CD8-positive, alpha-beta memory T cell (primary cell): ENCODE measurements at regions of chr22 and their contacts with region 1.

Region 1: DNA sequence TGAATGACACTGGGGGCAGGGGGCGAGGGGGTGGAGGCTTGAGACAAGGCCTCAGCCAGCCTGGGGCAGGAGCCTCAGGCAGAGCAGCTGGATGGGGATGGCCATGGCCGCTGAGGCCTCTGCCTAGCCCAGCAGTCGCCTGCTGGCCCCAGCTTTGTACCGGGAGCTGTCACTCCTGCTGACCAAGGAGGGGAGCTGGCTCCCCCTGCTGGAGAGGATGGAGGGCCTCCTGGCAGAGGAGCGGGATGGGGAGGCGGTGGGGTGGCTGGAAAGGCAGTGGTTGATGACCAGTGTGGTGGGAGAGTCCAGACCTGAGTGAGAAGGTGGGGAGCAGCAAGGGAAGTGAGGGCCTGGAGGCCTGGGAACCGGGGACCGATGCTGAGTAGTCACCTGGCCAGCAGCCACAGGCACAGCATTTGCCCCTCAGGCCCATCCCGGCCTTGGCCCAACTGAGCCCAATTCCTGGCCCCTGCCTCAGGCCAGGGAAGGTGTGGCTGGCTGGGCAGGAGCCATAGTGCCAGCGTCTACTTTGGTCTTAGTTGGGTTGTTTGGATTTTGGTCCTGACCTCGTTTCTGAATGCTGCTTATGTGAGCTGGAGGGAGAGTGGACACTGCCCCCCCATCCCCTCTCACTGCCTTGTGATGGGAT is 6.0 kb upstream of the SUSD2 start:
- DNase-seq: peak; percentile 39 to 78 (median 49)
- H3K4me3 ChIP-seq: no peak overlapping the region
- H3K4me3 Mint-ChIP-seq: no peak overlapping the region
- H3K27ac ChIP-seq: no peak overlapping the region
- H3K27ac Mint-ChIP-seq: peak overlapping the region in 6 of 8 donors; percentile 42 to 93 (median 64)
- H3K4me1 ChIP-seq: no peaks in the 10 kb centered on the region
- H3K4me1 Mint-ChIP-seq: no peaks in the 10 kb centered on the region
- H3K27me3 ChIP-seq: no peaks in the 10 kb centered on the region
- H3K27me3 Mint-ChIP-seq: no peaks in the 10 kb centered on the region

Region 2: GRCh38 chr22:24106385-24107381 is 68.6 kb before region 1 on chr22:
- CTCF ChIA-PET with region 1: interaction called, 25 read pairs
- POLR2A ChIA-PET with region 1: no interaction called
- DNase-seq: peak; percentile 16 to 61 (median 22)
- H3K4me3 ChIP-seq: no peak overlapping the region
- H3K4me3 Mint-ChIP-seq: no peak overlapping the region
- H3K27ac ChIP-seq: no peak overlapping the region
- H3K27ac Mint-ChIP-seq: peak overlapping the region in 3 of 8 donors; percentile 40 to 60 (median 44)
- H3K4me1 ChIP-seq: no peaks in the 10 kb centered on the region
- H3K4me1 Mint-ChIP-seq: peaks cover 5 to 14% (median 8%) of the 10 kb centered on the region in 3 donors
- H3K27me3 ChIP-seq: no peaks in the 10 kb centered on the region
- H3K27me3 Mint-ChIP-seq: no peaks in the 10 kb centered on the region

Region 3: DNA sequence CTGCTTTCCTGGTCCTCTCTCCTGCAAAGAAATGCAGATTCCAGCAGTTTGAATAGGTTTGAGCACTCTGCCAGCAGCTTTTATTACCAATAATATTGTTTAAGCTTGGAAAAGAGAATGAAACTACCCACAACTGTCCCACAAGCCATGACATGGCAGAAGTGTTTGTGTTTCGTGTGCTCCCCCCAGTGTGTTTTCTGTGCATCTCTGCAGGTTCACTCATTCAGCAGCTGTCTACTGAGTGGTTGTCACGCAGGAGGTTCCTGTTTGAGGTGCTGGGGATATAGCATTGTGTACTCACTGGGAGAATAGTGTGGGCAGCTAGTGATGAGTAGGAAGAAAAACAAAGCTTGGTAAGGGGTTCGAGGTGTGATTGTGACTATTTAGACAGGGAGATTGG is 49.3 kb before region 1 on chr22:
- CTCF ChIA-PET with region 1: interaction called, 11 read pairs
- POLR2A ChIA-PET with region 1: no interaction called
- DNase-seq: no peak
- H3K4me3 ChIP-seq: no peak overlapping the region
- H3K4me3 Mint-ChIP-seq: no peak overlapping the region
- H3K27ac ChIP-seq: no peak overlapping the region
- H3K27ac Mint-ChIP-seq: peak overlapping the region in 5 of 8 donors; percentile 19 to 79 (median 48)
- H3K4me1 ChIP-seq: no peaks in the 10 kb centered on the region
- H3K4me1 Mint-ChIP-seq: peaks cover 0 to 4% (median 0%) of the 10 kb centered on the region in 3 donors
- H3K27me3 ChIP-seq: no peaks in the 10 kb centered on the region
- H3K27me3 Mint-ChIP-seq: no peaks in the 10 kb centered on the region

Region 4: DNA sequence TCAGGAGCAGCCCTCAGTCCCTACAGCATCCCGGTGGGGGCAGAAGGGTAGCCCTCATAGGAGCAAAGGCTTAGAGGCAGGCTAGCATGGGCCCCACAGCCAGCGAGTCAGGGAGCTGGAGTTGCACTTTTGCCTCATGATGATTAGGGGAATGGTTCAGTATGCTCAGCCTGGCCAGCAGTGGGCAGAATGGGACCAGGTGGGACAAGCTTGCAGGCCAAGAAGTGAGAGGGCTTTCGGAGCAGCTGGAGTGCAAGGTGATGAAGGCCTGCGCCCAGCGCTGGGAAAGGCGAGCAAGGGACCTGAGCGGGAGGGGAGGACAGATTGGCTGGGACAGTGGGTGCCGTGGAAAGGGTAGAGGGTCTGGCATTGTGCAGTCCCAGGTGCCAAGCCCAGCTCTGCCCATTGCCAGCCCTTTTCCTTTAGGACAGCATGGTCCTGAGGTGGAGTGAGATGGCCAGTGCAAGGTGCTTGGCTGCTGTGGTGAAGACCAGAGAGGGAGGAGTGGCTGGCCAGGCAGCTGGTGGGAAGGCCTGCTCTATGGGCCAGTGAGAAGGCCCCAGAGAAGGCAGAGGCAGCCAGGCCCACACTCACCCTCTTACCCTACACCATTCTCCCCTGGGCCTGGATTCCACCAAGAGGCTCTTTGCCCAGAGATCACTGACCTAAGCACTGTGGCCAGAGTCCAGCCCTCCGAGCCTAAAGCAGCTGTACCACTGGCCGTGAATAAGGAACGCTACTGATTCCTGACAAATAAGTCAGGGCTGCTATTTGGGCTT is 41.9 kb before region 1 on chr22:
- CTCF ChIA-PET with region 1: interaction called, 72 read pairs
- POLR2A ChIA-PET with region 1: interaction called, 6 read pairs
- DNase-seq: peak; percentile 7 to 74 (median 39)
- H3K4me3 ChIP-seq: no peak overlapping the region
- H3K4me3 Mint-ChIP-seq: peak overlapping the region in 3 of 7 donors; percentile 16 to 25 (median 20)
- H3K27ac ChIP-seq: no peak overlapping the region
- H3K27ac Mint-ChIP-seq: peak overlapping the region; percentile 49 to 94 (median 84)
- H3K4me1 ChIP-seq: peaks cover 21% of the 10 kb centered on the region
- H3K4me1 Mint-ChIP-seq: peaks cover 14 to 31% (median 19%) of the 10 kb centered on the region in 3 donors
- H3K27me3 ChIP-seq: no peaks in the 10 kb centered on the region
- H3K27me3 Mint-ChIP-seq: no peaks in the 10 kb centered on the region

Region 5: GRCh38 chr22:24140357-24140756 is 34.9 kb before region 1 on chr22:
- CTCF ChIA-PET with region 1: interaction called, 72 read pairs
- POLR2A ChIA-PET with region 1: no interaction called
- DNase-seq: no peak
- H3K4me3 ChIP-seq: no peak overlapping the region
- H3K4me3 Mint-ChIP-seq: no peak overlapping the region
- H3K27ac ChIP-seq: no peak overlapping the region
- H3K27ac Mint-ChIP-seq: peak overlapping the region in 5 of 8 donors; percentile 26 to 87 (median 63)
- H3K4me1 ChIP-seq: peaks cover 61% of the 10 kb centered on the region
- H3K4me1 Mint-ChIP-seq: peaks cover 43 to 74% (median 46%) of the 10 kb centered on the region in 3 donors
- H3K27me3 ChIP-seq: no peaks in the 10 kb centered on the region
- H3K27me3 Mint-ChIP-seq: no peaks in the 10 kb centered on the region

Region 6: DNA sequence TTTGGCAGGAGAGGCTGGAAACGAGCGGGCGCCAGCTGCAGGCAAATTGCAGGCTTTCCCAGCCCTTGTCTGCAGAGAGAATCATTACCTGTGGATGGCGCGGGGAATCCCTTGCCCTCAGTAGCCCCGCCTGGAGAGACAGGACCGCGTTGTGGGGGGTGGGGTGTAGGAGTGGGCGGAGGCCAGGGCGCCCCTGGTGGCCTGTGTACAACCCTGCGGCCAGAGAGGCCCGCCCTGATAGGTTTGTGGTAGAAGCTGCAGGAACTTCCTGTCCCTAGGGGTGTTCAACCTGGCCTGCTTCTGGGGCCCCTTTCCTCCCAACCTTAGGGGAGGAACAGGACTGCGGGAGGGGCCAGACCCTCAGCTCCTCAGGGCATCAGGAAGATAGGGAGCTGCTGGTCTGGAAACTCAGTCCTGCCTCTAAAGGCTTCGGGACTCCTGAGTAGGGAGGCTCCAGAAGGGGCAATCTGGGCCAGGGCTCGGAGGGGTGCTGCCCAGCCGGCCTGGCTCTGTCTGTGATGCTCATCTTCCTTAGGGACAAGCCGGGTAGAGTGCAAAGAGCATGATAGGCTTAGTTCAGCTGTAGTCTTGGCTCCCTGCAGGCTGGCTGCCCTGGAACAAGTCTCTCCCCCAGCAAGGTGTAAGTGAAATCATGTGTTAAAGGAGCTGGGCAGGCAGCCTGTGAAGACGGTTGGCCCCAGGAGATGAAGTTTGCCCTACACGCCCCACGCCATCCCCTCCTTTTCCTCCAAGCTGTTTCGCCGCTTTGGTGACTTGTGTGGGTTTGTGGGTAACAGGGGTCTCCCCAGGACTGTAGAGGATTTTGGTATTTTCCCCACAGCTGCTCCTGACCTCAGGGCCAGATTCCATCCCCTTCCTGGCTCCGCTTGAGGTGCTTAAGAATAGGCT is 18.1 kb before region 1 on chr22:
- CTCF ChIA-PET with region 1: interaction called, 68 read pairs
- POLR2A ChIA-PET with region 1: interaction called, 3 read pairs
- DNase-seq: peak; percentile 82 to 93 (median 87)
- H3K4me3 ChIP-seq: peak overlapping the region; percentile 94
- H3K4me3 Mint-ChIP-seq: peak overlapping the region; percentile 92 to 99 (median 97)
- H3K27ac ChIP-seq: peak overlapping the region; percentile 77
- H3K27ac Mint-ChIP-seq: peak overlapping the region; percentile 82 to 100 (median 94)
- H3K4me1 ChIP-seq: peaks cover 72% of the 10 kb centered on the region
- H3K4me1 Mint-ChIP-seq: peaks cover 71 to 90% (median 73%) of the 10 kb centered on the region in 3 donors
- H3K27me3 ChIP-seq: no peaks in the 10 kb centered on the region
- H3K27me3 Mint-ChIP-seq: peaks cover 0 to 3% of the 10 kb centered on the region in 2 donors

Region 7: GRCh38 chr22:24225044-24225601 is 49.8 kb after region 1 on chr22:
- CTCF ChIA-PET with region 1: no interaction called
- POLR2A ChIA-PET with region 1: no interaction called
- DNase-seq: no peak
- H3K4me3 ChIP-seq: no peak overlapping the region
- H3K4me3 Mint-ChIP-seq: no peak overlapping the region
- H3K27ac ChIP-seq: no peak overlapping the region
- H3K27ac Mint-ChIP-seq: no peak overlapping the region
- H3K4me1 ChIP-seq: no peaks in the 10 kb centered on the region
- H3K4me1 Mint-ChIP-seq: no peaks in the 10 kb centered on the region
- H3K27me3 ChIP-seq: no peaks in the 10 kb centered on the region
- H3K27me3 Mint-ChIP-seq: peaks cover 0 to 2% of the 10 kb centered on the region in 2 donors

Region 8: GRCh38 chr22:24305260-24305692 is 130.0 kb after region 1 on chr22:
- CTCF ChIA-PET with region 1: no interaction called
- POLR2A ChIA-PET with region 1: no interaction called
- DNase-seq: peak in 1 of 5 donors; percentile 7
- H3K4me3 ChIP-seq: no peak overlapping the region
- H3K4me3 Mint-ChIP-seq: peak overlapping the region in 4 of 7 donors; percentile 0 to 17 (median 4)
- H3K27ac ChIP-seq: no peak overlapping the region
- H3K27ac Mint-ChIP-seq: peak overlapping the region in 6 of 8 donors; percentile 9 to 51 (median 38)
- H3K4me1 ChIP-seq: peaks cover 43% of the 10 kb centered on the region
- H3K4me1 Mint-ChIP-seq: peaks cover 37 to 59% (median 59%) of the 10 kb centered on the region in 3 donors
- H3K27me3 ChIP-seq: no peaks in the 10 kb centered on the region
- H3K27me3 Mint-ChIP-seq: no peaks in the 10 kb centered on the region

Region 9: GRCh38 chr22:24402460-24403192 is 227.3 kb after region 1 on chr22:
- CTCF ChIA-PET with region 1: no interaction called
- POLR2A ChIA-PET with region 1: no interaction called
- DNase-seq: no peak
- H3K4me3 ChIP-seq: no peak overlapping the region
- H3K4me3 Mint-ChIP-seq: no peak overlapping the region
- H3K27ac ChIP-seq: no peak overlapping the region
- H3K27ac Mint-ChIP-seq: peak overlapping the region in 4 of 8 donors; percentile 48 to 81 (median 61)
- H3K4me1 ChIP-seq: peaks cover 10% of the 10 kb centered on the region
- H3K4me1 Mint-ChIP-seq: peaks cover 30 to 39% (median 31%) of the 10 kb centered on the region in 3 donors
- H3K27me3 ChIP-seq: no peaks in the 10 kb centered on the region
- H3K27me3 Mint-ChIP-seq: no peaks in the 10 kb centered on the region